ENCODE measurements at regions of chr1 and their contacts with region 1.

Region 1: GRCh38 chr1:43414634-43415223 is 25.0 kb downstream of the SZT2 start:
- DNase-seq: peak; percentile 44 to 65
- H3K4me3 ChIP-seq: no peak overlapping the region
- H3K27ac ChIP-seq: no peak overlapping the region
- H3K4me1 ChIP-seq: no peaks in the 10 kb centered on the region
- H3K27me3 ChIP-seq: no peaks in the 10 kb centered on the region
- CTCF ChIP-seq: peak; percentile 80

Region 2: DNA sequence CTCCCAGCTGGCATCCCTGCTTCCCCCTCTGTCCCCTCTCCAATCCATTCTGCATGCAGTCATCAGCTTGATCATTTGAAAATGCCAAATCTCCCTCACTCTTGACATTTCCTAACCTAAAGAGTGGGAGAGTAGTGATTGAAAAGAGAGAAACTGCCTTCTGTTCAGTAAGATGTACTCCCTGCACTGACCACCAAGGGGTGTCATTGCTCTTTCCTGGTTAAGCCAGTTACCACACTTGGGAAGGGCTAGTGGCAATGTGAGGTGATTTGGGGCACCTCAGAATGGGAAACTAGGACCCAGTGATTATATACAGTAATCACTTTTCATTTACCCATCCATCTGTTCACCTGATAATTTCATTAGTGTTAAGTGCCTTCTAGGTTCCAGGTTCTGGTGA is 636.9 kb before region 1 on chr1:
- CTCF ChIA-PET with region 1: interaction called, 3 read pairs
- POLR2A ChIA-PET with region 1: no interaction called
- intact Hi-C with region 1: loop called (anchors 10 kb)
- DNase-seq: peak in 1 of 2 experiments; percentile 37
- H3K4me3 ChIP-seq: no peak overlapping the region
- H3K27ac ChIP-seq: no peak overlapping the region
- H3K4me1 ChIP-seq: no peaks in the 10 kb centered on the region
- H3K27me3 ChIP-seq: no peaks in the 10 kb centered on the region
- CTCF ChIP-seq: peak; percentile 84

Region 3: GRCh38 chr1:42913426-42914091 is 501.2 kb before region 1 on chr1:
- CTCF ChIA-PET with region 1: no interaction called
- POLR2A ChIA-PET with region 1: no interaction called
- intact Hi-C with region 1: loop called (anchors 1 kb)
- DNase-seq: peak; percentile 61 to 62
- H3K4me3 ChIP-seq: no peak overlapping the region
- H3K27ac ChIP-seq: no peak overlapping the region
- H3K4me1 ChIP-seq: no peaks in the 10 kb centered on the region
- H3K27me3 ChIP-seq: no peaks in the 10 kb centered on the region
- CTCF ChIP-seq: peak; percentile 92

Region 4: DNA sequence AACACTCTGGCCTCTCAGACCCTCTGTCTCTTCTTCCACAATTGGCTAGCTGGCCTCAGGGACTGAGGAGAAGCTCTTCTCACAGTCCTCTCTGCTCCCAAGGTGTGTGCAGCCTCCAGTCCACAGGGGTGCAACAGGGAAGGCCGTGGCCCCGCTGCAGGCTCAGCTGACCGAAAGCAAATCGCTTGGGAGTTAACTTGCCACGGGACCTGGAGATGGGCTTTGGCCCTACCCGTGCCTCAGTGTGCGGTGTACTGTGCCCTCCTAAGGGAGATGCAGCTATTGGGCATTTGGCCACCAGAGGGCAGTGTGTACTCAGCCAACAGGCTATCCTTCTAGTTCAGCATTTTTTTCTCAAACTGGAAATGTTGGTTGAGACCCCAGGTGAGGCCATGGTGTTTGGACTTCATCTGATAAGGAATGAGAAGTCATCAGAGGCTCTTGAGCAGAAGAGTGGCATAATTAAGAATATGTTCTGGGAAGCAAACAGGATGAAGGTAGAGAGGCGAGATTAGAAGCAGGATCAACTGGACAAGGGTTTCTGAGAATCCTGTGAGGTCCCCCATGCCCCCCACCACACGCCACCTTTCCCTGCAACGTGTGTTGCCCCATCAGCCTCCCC is 187.5 kb before region 1 on chr1:
- CTCF ChIA-PET with region 1: interaction called, 19 read pairs
- POLR2A ChIA-PET with region 1: no interaction called
- intact Hi-C with region 1: loop called (anchors 1 kb)
- DNase-seq: peak; percentile 73 to 88
- H3K4me3 ChIP-seq: no peak overlapping the region
- H3K27ac ChIP-seq: no peak overlapping the region
- H3K4me1 ChIP-seq: peaks cover 16% of the 10 kb centered on the region
- H3K27me3 ChIP-seq: no peaks in the 10 kb centered on the region
- CTCF ChIP-seq: peak; percentile 97

Region 5: DNA sequence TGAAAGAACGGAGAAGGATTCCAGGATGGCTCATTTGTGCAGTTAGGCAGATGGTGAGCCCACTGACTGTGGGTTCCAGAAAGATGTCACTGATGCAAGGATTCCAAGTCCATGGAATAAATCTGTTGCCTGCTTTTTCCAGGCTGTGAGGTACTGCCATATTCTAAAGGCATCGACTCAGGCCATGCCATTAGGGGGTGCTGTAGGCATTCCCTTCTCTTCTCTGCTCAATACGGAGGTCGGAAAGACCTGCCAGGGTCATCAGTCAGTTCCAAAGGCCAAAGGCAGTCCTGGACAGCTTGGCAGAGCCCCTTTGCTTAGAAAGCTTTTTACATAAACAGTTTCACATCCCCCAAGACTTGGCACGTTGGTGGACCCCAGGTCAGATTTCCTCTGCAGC is 176.6 kb before region 1 on chr1:
- CTCF ChIA-PET with region 1: interaction called, 8 read pairs
- POLR2A ChIA-PET with region 1: no interaction called
- intact Hi-C with region 1: loop called (anchors 1 kb)
- DNase-seq: peak; percentile 47 to 73
- H3K4me3 ChIP-seq: no peak overlapping the region
- H3K27ac ChIP-seq: no peak overlapping the region
- H3K4me1 ChIP-seq: peaks cover 12% of the 10 kb centered on the region
- H3K27me3 ChIP-seq: no peaks in the 10 kb centered on the region
- CTCF ChIP-seq: peak; percentile 84

Region 6: GRCh38 chr1:43358746-43359693 is 55.7 kb before region 1 on chr1 and contains the start of gene CDC20:
- CTCF ChIA-PET with region 1: interaction called, 3 read pairs
- POLR2A ChIA-PET with region 1: interaction called, 4 read pairs
- intact Hi-C with region 1: loop called (anchors 2 kb)
- DNase-seq: peak; percentile 95 to 99
- H3K4me3 ChIP-seq: peak within 1 kb of the TSS; percentile 86
- H3K27ac ChIP-seq: peak within 1 kb of the TSS; percentile 83
- H3K4me1 ChIP-seq: peaks cover 47% of the 10 kb centered on the region
- H3K27me3 ChIP-seq: no peaks in the 10 kb centered on the region
- CTCF ChIP-seq: no peak
- total RNA-seq, gene CDC20: 180 and 229 TPM in 2 replicates

Region 7: DNA sequence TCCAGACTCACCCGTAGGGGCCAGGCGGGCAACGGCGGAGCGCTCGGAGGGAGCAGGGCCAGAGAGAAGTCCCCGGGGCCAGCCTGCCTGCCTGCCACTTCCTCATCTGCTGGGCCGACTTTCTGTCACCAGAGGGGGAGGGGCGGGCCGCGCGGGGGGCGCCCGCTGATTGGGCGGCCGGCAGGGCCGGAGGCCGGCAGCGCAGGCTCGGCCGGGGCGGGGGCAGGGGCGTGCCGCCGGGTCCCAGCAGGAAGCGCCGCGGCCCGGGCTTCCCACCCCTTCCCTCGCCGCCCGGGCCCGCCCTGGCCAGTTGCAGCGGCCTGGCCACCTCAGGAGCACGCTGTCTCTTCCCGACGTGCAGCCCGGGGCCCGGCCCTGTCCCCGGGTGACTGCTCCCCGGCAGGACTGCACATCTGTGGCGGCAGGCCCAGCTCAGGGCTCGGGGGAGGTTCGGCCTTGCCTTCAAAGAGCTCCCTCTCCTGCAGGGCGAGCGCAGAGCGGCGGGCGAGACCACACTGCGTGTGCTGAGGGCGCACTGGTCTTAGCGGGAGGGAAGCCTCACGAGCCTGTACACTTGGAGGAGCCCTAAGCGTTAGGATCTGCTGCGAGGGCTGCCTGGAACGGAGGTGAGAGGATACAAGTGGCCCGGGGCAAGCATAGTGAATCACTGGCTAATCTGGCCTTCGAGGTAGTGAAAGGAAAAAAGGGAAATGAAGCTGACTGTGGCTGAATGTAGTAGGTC is 46.7 kb before region 1 on chr1 and contains the start of gene ELOVL1:
- CTCF ChIA-PET with region 1: no interaction called
- POLR2A ChIA-PET with region 1: no interaction called
- intact Hi-C with region 1: loop called (anchors 2 kb)
- DNase-seq: peak; percentile 82 to 96
- H3K4me3 ChIP-seq: peak within 1 kb of the TSS; percentile 99
- H3K27ac ChIP-seq: peak within 1 kb of the TSS; percentile 89
- H3K4me1 ChIP-seq: peaks cover 69% of the 10 kb centered on the region
- H3K27me3 ChIP-seq: no peaks in the 10 kb centered on the region
- CTCF ChIP-seq: peak; percentile 33; the same call in 1 of the 2 replicates
- total RNA-seq, gene ELOVL1: 131 TPM in 2 replicates